Colonic mucosa (tissue), 4 donors: ENCODE measurements at regions of chr6 and their contacts with region 1.

Region 1: GRCh38 chr6:158813032-158813729 is 6.0 kb downstream of the EZR start:
- DNase-seq: no peak
- H3K4me3 ChIP-seq: no peak overlapping the region
- H3K27ac ChIP-seq: no peak overlapping the region
- H3K4me1 ChIP-seq: peaks cover 11% of the 10 kb centered on the region
- H3K27me3 ChIP-seq: no peaks in the 10 kb centered on the region
- CTCF ChIP-seq: no peak

Region 2: DNA sequence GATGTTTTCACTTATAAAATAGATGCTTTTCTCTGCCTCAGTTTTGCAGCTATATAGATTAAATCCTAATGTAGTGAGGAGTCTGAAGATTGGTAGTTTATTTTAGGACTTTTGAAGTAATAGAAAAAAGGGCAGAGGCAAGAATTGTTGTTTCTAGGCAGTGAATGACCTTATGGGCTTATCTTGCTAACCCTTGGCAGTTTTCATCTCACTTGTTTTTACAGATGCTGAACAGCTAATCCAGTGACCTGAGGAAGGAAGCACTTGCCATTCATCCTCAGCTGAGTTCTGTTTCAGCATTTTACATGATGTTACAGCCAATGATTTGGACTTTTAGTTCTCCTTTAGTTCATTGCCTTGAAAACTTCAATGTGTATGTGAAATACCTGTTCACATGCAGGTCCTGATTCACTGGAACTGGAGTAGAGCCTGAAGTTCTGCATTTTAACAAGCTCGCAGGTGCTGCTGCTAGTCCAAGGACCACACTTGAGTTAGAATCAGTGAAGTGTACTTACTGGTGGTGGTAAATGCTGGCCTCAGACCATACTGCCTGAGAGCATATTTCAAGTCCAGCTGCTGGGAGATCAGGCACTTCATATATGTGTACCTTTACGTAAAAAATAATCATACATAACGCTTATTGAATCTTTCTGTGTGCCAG is 414.0 kb before region 1 on chr6:
- intact Hi-C with region 1: no loop called
- DNase-seq: no peak
- H3K4me3 ChIP-seq: no peak overlapping the region
- H3K27ac ChIP-seq: no peak overlapping the region
- H3K4me1 ChIP-seq: no peaks in the 10 kb centered on the region
- H3K27me3 ChIP-seq: no peaks in the 10 kb centered on the region
- CTCF ChIP-seq: no peak

Region 3: DNA sequence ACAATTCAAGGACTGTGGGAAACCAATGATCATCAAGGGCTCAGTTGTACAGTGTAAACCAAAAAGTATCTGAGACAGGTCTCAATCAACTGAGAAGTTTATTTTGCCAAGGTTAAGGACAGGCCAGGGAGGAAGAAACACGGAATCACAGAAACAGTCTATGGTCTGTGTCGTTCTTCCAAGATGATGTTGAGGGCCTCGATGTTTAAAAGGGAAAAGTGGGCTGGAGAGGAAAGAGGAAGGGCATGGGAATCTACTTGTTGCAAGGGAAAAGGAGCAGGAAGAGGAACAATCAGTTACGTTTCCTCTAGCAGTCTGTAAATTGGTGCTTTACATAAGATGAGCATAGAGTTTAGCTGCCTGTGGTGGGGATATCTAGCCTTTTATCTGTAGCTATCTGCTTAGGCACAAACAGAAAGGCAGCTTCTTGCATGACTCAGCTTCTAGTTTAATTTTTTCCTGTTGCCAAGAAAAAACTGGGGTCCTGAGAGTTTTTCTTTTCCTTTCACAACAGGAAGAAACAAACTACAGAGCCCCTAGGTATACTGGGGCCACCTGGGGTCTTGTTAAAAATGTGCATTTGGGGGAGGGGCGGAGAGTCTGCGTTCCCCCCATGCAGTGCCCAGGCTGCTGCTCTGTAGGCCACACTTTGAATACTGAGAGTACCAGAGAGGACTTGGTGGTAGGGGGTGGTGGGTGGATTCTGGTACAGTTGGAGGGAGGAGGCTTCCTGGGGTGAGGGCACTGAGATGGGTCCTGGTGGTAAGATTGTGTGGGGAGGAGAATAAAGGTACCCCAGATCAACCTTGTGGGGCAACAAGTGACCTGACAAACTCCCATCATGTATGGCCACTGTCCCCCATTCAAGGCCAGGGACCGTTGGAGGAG is 41.3 kb after region 1 on chr6:
- intact Hi-C with region 1: loop called (anchors 2 kb)
- DNase-seq: no peak
- H3K4me3 ChIP-seq: no peak overlapping the region
- H3K27ac ChIP-seq: peak overlapping the region; percentile 77
- H3K4me1 ChIP-seq: peaks cover 8% of the 10 kb centered on the region
- H3K27me3 ChIP-seq: no peaks in the 10 kb centered on the region
- CTCF ChIP-seq: no peak

Region 4: DNA sequence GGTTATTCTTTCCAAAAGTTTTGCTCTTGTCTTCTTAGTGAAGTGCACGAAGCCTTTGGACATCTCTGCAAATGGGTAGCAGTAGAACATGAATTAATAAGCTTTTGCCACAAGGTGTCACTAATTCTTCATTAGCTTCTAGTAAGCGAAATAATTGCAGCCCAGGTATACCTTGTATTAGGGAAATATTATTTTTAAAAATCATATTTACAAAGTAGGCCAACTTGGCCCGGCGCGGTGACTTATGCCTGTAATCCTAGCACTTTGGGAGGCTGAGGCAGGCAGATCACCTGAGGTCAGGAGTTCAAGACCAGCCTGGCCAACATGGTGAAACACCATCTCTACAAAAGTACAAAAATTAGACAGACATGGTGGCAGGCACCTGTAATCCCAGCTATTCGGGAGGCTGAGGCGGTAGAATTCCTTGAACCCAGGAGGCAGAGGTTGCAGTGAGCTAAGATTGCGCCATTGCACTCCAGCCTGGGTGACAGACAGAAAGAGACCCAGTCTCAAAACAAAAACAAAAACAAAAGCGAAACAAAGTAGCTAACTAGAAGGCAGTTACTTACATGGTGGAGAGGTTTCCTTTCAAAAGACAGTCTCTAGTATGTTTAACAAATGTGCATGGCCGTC is 195.6 kb after region 1 on chr6:
- intact Hi-C with region 1: no loop called
- DNase-seq: no peak
- H3K4me3 ChIP-seq: no peak overlapping the region
- H3K27ac ChIP-seq: no peak overlapping the region
- H3K4me1 ChIP-seq: no peaks in the 10 kb centered on the region
- H3K27me3 ChIP-seq: no peaks in the 10 kb centered on the region
- CTCF ChIP-seq: peak; percentile 36